Left cardiac atrium (tissue), 4 donors: ENCODE measurements at regions of chr17 and their contacts with region 1.

Region 1: DNA sequence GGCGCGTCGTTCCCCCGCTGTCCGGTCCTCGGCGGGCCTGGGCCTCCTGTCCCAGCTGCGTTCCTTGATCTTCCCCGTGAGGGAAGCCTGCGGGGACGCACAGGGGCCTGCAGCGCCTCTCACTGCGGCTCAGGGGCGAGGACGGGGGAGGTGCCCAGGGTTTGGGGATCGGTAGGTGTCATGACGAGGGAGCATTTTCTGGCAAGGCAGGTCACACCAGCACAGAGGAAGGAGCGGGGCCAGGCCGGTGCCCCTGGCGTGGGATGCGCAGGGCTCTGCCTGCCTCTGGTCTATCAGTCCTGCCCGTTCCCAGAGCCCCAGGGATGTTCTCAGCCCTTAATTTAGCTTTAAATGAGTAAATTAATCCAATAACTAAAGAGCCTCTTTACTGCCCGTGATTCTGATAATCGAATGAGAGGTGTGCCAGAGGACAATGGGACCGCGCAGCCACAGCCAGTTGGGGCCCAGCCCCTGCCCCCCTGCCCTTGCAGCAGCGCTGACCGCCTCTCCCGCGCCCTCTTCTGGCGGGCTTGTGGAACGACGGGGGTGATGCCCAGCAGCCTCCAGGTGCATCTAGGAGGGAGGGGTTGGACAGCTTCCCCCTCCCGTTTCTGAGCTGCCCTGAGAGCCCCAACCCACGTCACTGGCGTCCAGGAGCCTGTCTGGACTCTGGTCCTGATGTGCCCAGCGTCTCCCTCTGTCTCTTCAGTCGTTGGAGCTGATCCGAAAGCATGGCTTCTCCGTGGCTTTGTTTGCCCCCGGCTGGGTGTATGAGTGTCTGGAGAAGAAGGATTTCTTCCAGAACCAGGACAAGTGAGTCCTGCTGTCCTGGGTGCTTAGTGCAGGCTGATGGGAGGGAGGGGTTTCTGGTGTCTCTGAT is 7.9 kb downstream of the ENGASE start:
- DNase-seq: peak; percentile 52
- ATAC-seq: peak; percentile 41 to 48

Region 2: GRCh38 chr17:78089576-78090281 is 992.8 kb before region 1 on chr17:
- intact Hi-C with region 1: no loop called
- DNase-seq: no peak
- ATAC-seq: peak in 1 of 2 donors; percentile 42

Region 3: DNA sequence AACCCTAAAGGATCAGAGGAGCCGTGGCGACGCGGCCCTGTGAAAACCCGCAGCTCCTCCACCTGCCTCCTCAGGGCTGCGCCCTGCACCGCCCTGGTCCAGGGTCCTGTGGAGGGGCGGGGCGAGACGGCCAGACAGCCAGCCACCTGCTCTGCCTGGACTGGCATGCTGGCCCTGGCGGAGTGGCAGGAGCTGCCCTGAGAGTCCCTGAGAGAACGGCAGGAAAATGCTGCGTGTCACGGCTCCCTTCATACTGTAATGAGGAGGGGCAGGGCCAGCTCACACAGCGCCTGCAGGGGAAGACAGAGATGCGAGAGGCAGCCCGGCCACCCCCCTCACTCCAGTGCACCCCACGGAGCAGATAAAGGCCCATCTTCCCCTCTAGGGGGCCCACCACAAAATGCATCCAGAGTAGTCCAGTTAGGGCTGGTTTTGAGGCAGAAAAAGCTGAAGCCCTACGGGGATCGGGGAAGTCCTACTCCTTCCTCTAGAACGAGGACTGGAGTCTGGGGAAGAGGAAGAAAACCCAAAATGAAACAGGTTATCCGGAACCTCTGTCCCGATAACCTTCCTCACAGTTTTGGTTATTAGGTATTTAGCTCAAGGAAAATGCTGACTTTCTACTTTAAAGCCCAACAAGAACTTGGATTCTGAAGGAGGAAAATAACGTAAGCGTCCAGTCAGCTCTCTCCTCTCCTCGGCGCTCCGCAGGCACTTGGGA is 407.8 kb before region 1 on chr17:
- intact Hi-C with region 1: no loop called
- DNase-seq: no peak
- ATAC-seq: no peak

Region 4: DNA sequence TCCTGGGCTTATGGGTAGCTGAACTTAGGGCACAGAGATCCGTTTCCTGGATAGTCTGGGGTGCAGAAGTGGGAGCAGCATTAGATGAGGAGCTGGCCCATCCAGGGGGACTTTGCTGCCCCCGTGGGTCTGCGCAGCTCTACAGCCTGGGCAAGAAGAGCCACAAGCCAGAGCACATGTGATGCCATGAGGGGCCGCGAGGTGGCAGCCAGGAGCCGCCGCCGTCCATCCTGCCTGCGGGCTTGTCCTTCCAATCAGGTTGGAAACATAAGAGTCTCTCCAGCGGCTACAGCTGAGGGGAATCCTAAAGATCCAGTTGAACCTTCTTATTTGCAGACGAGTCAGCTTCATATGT is 36.7 kb before region 1 on chr17:
- intact Hi-C with region 1: loop called in 1 of 2 experiments (anchors 5 kb)
- DNase-seq: peak; percentile 78
- ATAC-seq: peak; percentile 69